Left cardiac atrium (tissue), 4 donors: ENCODE measurements at regions of chr1 and their contacts with region 1.

Region 1: GRCh38 chr1:248807067-248807737 is 18.5 kb downstream of the SH3BP5L start:
- DNase-seq: peak; percentile 61
- ATAC-seq: peak; percentile 68 to 77

Region 2: GRCh38 chr1:248622570-248623001 is 184.6 kb before region 1 on chr1:
- intact Hi-C with region 1: loop called (anchors 5 kb)
- DNase-seq: no peak
- ATAC-seq: peak; percentile 61 to 67

Region 3: GRCh38 chr1:248703674-248704073 is 103.5 kb before region 1 on chr1:
- intact Hi-C with region 1: loop called in 1 of 2 experiments (anchors 5 kb)
- DNase-seq: no peak
- ATAC-seq: no peak